Heart left ventricle (tissue), 16 donors: ENCODE measurements at regions of chr4 and their contacts with region 1.

Region 1: GRCh38 chr4:128287871-128288688 is 467 bp upstream of the PGRMC2 start:
- DNase-seq: peak; percentile 99 to 100 (median 100)
- ATAC-seq: peak; percentile 93 to 96 (median 96)
- H3K4me3 ChIP-seq: peak overlapping the region; percentile 46 to 90 (median 77)
- H3K27ac ChIP-seq: peak overlapping the region; percentile 77 to 98 (median 94)
- H3K4me1 ChIP-seq: peaks cover 0 to 42% (median 27%) of the 10 kb centered on the region in 12 donors
- H3K27me3 ChIP-seq: no peaks in the 10 kb centered on the region
- CTCF ChIP-seq: peak in 8 of 12 donors; percentile 3 to 35 (median 12)
- POLR2A ChIP-seq: peak in 1 of 2 donors; percentile 81

Region 2: GRCh38 chr4:128354205-128354821 is 66.2 kb after region 1 on chr4:
- intact Hi-C with region 1: loop called in 4 of 10 experiments (anchors 2 to 5 kb)
- DNase-seq: peak in 3 of 5 donors; percentile 24 to 72 (median 37)
- ATAC-seq: peak in 2 of 4 donors; percentile 11 to 28
- H3K4me3 ChIP-seq: no peak overlapping the region
- H3K27ac ChIP-seq: peak overlapping the region in 6 of 12 donors; percentile 5 to 55 (median 52)
- H3K4me1 ChIP-seq: peaks cover 0 to 44% (median 23%) of the 10 kb centered on the region in 12 donors
- H3K27me3 ChIP-seq: no peaks in the 10 kb centered on the region
- CTCF ChIP-seq: no peak
- POLR2A ChIP-seq: no peak

Region 3: DNA sequence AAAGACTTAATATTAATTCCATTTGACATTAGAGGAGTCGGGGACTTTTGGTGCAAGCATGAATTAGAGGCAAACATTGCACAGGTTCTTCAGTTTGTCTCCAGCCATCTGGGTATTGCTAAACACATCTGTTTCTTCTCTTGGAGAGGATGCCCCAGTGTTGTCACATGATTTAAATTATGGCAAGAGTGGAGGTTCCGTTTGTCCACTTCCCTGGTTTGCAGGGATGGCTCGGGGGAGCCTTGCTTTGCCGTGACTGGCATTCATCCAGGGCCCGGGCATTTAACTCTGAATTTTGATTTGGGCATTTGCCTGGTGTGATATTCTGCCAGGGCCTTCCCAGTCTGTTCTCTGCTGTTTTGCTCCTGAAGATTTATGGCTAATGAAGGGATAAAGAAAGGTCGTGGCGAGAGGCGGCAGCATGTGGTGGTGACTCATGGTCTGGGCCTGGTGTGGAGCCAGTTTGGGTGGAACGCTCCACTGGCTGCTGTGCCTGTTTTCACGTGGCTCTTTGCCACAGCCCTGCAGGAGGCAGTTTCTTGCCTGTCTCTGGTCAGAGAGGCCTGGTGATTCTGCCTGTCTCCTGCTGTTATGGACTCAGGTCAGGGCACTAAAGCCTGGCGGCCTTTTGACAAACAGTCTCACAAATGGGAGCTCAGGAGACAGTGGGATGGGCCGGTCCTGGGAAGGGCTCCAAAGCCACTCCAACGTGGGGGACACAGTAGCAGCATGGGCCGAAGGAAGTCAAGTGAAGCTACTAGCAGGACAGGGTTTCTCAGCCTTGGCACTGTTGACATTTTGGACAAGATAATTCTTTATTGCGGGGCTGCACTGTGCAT is 98.9 kb after region 1 on chr4:
- intact Hi-C with region 1: loop called in 3 of 10 experiments (anchors 2 to 10 kb)
- DNase-seq: peak; percentile 83 to 94 (median 89)
- ATAC-seq: peak; percentile 93 to 97 (median 96)
- H3K4me3 ChIP-seq: peak overlapping the region in 5 of 12 donors; percentile 3 to 29 (median 15)
- H3K27ac ChIP-seq: peak overlapping the region; percentile 66 to 92 (median 82)
- H3K4me1 ChIP-seq: peaks cover 0 to 45% (median 26%) of the 10 kb centered on the region in 12 donors
- H3K27me3 ChIP-seq: no peaks in the 10 kb centered on the region
- CTCF ChIP-seq: no peak
- POLR2A ChIP-seq: no peak

Region 4: DNA sequence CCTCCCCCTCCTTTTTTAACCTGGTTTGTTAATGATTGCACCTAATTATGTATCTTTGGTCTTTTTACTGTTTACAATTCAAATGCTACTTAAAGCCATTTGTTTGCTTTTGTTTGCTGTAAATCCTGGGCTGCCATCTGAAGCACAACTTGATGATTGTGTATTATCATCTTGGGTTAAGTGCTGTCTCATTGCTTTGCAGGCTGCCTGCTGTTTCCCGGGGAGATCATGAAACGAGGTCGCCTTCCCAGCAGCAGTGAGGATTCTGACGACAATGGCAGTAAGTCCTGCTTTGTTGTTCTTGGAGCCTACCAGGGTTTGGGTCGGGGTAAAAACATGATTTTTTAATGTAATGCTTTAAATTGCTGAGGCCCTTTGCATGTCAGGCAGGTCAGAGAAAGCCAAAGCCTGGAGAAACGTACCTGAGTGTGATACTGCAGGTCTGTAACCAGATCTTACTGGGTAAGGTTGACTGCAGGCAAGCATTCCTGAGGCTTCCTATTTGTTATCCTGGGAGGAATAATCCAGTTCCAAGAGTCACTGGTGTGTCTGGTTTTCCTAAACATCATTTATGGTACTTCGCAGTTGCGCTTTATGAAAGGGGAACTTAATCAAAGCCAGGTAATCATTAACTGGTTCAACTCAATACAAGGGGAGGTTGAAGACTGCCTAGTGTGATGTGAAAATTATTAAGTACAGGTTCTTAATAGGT is 543.6 kb after region 1 on chr4:
- intact Hi-C with region 1: loop called in 1 of 10 experiments (anchors 10 kb)
- DNase-seq: no peak
- ATAC-seq: no peak
- H3K4me3 ChIP-seq: no peak overlapping the region
- H3K27ac ChIP-seq: peak overlapping the region in 10 of 12 donors; percentile 3 to 70 (median 44)
- H3K4me1 ChIP-seq: peaks cover 0 to 80% (median 53%) of the 10 kb centered on the region in 12 donors
- H3K27me3 ChIP-seq: no peaks in the 10 kb centered on the region
- CTCF ChIP-seq: no peak
- POLR2A ChIP-seq: no peak

Region 5: GRCh38 chr4:129093191-129093920 is 805.3 kb after region 1 on chr4 and contains the start of gene SCLT1:
- intact Hi-C with region 1: loop called in 2 of 10 experiments (anchors 5 to 10 kb)
- DNase-seq: peak; percentile 99 to 100 (median 99)
- ATAC-seq: peak; percentile 99
- H3K4me3 ChIP-seq: peak within 1 kb of the TSS; percentile 42 to 92 (median 78)
- H3K27ac ChIP-seq: peak within 1 kb of the TSS; percentile 81 to 98 (median 94)
- H3K4me1 ChIP-seq: peaks cover 0 to 59% (median 23%) of the 10 kb centered on the region in 12 donors
- H3K27me3 ChIP-seq: no peaks in the 10 kb centered on the region
- CTCF ChIP-seq: peak in 1 of 12 donors; percentile 12
- POLR2A ChIP-seq: peak in 1 of 2 donors; percentile 91
- total RNA-seq, gene SCLT1: 5.3 to 13.7 (median 10.8) TPM